Endothelial cell of umbilical vein (primary cell): ENCODE measurements at regions of chr1 and their contacts with region 1.

Region 1: DNA sequence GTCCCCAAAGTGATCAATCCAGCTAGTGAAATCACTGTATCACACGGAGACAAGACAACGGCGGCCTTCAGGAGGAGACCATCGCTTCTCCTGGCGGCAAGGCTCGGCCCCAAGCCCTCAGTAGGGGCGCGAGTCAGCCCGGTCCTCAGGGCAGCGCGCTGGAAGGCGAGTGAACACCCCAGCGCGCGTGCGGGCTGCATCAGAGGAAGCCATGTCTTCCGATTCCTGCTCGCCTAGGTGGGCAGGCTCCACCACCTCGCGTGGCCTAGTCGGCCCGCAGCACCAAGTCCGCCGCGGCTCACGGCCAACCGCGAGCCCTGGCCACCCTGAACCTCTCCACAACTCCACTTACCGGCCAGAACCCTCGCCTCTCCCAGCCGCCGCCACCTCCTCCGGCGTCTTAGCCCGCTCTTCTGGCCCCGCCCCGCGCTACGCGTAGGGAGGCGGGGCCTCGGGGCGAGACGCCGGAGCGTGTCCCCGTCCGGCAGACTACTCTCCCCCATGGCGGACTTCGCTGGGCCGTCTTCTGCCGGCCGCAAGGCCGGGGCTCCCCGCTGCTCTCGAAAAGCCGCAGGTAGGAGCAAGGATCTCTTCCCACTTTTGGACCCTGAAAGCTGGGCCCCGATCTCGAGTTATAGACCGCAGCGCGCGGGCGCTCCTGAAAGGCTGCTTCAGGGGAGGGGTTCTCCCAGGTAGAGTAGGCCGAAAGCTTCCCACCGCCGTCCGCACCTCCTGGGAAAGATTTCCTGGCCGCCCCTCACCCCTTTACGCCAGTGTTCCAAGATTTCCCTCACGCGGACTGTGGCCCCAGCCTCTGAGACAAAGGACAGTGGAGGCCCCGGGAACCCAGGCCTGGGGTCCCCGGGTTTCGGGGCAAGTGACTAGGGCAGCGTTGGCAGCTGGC is at the starts of genes GLMN and RPAP2:
- DNase-seq: peak; percentile 90
- H3K4me3 ChIP-seq: peak within 1 kb of the TSS; percentile 68 to 99 (median 97)
- H3K27ac ChIP-seq: peak within 1 kb of the TSS; percentile 89
- H3K4me1 ChIP-seq: peaks cover 10% of the 10 kb centered on the region
- H3K27me3 ChIP-seq: no peaks in the 10 kb centered on the region
- CTCF ChIP-seq: peak; percentile 3 to 23
- POLR2A ChIP-seq: peak; percentile 92
- total RNA-seq, gene GLMN: 13.2 and 13.7 TPM in 2 replicates
- total RNA-seq, gene RPAP2: 23.5 and 24.9 TPM in 2 replicates

Region 2: GRCh38 chr1:92080128-92080985 is 218.5 kb before region 1 on chr1 and contains the start of gene BTBD8:
- CTCF ChIA-PET with region 1: no interaction called
- POLR2A ChIA-PET with region 1: no interaction called
- dilution Hi-C with region 1: no loop called
- intact Hi-C with region 1: loop called (anchors 10 kb)
- DNase-seq: peak; percentile 78
- H3K4me3 ChIP-seq: peak within 1 kb of the TSS; percentile 54 to 93 (median 70)
- H3K27ac ChIP-seq: peak within 1 kb of the TSS; percentile 10
- H3K4me1 ChIP-seq: peaks cover 2% of the 10 kb centered on the region
- H3K27me3 ChIP-seq: peaks cover 0 to 2% of the 10 kb centered on the region in 2 experiments
- CTCF ChIP-seq: no peak
- POLR2A ChIP-seq: no peak
- total RNA-seq, gene BTBD8: 1.5 and 1.7 TPM in 2 replicates

Region 3: GRCh38 chr1:92096317-92096716 is 202.5 kb before region 1 on chr1:
- CTCF ChIA-PET with region 1: no interaction called
- POLR2A ChIA-PET with region 1: no interaction called
- dilution Hi-C with region 1: no loop called
- intact Hi-C with region 1: no loop called
- DNase-seq: no peak
- H3K4me3 ChIP-seq: no peak overlapping the region
- H3K27ac ChIP-seq: no peak overlapping the region
- H3K4me1 ChIP-seq: no peaks in the 10 kb centered on the region
- H3K27me3 ChIP-seq: no peaks in the 10 kb centered on the region
- CTCF ChIP-seq: no peak
- POLR2A ChIP-seq: no peak

Region 4: GRCh38 chr1:92230736-92231135 is 68.1 kb before region 1 on chr1:
- CTCF ChIA-PET with region 1: no interaction called
- POLR2A ChIA-PET with region 1: no interaction called
- dilution Hi-C with region 1: no loop called
- intact Hi-C with region 1: no loop called
- DNase-seq: no peak
- H3K4me3 ChIP-seq: no peak overlapping the region
- H3K27ac ChIP-seq: no peak overlapping the region
- H3K4me1 ChIP-seq: no peaks in the 10 kb centered on the region
- H3K27me3 ChIP-seq: peaks cover 0 to 2% of the 10 kb centered on the region in 2 experiments
- CTCF ChIP-seq: no peak
- POLR2A ChIP-seq: no peak

Region 5: GRCh38 chr1:92277105-92277723 is 21.6 kb before region 1 on chr1:
- CTCF ChIA-PET with region 1: no interaction called
- POLR2A ChIA-PET with region 1: no interaction called
- dilution Hi-C with region 1: no loop called
- intact Hi-C with region 1: no loop called
- DNase-seq: peak; percentile 55
- H3K4me3 ChIP-seq: no peak overlapping the region
- H3K27ac ChIP-seq: peak overlapping the region; percentile 75
- H3K4me1 ChIP-seq: peaks cover 20% of the 10 kb centered on the region
- H3K27me3 ChIP-seq: no peaks in the 10 kb centered on the region
- CTCF ChIP-seq: no peak
- POLR2A ChIP-seq: no peak

Region 6: DNA sequence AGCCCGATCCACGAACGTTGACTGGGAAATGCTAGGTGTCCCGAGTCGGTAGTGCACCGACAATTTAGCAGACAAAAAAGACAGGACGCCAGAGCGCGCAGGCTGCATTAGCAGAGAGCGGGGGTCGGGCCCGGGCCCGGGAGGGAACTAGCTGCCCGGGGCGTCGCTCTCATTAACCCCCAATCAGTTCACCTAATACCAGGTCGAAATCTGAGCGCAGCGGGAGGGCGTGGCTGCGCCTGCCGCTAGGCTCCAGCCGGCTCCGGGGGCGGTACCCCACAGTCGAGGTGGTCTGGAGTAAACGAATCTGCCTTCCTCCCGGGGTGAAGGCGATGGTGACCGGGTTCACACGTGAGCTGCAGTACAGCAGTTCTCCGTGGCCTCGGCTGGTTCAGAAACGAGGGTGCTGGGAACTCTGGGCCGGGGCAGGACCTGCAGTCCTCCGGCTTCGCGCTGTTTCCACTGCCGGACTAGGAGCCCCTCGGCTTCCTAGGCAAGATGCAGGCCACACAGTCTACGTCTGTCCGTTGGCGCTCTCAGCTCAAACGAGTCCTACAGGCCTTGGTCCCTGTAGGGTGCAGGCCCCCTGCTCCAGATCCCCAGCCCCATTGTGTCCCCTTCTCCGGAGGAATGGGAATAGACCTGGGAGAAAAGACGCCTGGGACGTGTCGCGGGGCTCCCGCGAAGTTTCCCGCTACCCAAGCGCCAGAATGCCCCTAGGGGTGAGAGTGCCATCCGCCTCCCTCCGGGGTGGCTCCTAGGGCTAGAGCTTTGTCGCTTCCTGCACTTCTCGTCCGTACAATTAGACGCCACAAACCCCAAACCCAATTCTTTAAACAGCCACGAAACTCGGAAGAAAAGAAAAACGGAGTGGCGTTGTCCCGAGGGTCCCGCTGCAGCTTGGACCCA is 185.9 kb after region 1 on chr1:
- CTCF ChIA-PET with region 1: no interaction called
- POLR2A ChIA-PET with region 1: no interaction called
- dilution Hi-C with region 1: no loop called
- intact Hi-C with region 1: loop called (anchors 5 kb)
- DNase-seq: peak; percentile 23
- H3K4me3 ChIP-seq: peak overlapping the region in 1 of 3 experiments; percentile 26
- H3K27ac ChIP-seq: no peak overlapping the region
- H3K4me1 ChIP-seq: peaks cover 55% of the 10 kb centered on the region
- H3K27me3 ChIP-seq: peaks cover 66 to 94% of the 10 kb centered on the region in 2 experiments
- CTCF ChIP-seq: no peak
- POLR2A ChIP-seq: no peak